CD4-positive, alpha-beta T cell (primary cell): ENCODE measurements at regions of chr14 and their contacts with region 1.

Region 1: DNA sequence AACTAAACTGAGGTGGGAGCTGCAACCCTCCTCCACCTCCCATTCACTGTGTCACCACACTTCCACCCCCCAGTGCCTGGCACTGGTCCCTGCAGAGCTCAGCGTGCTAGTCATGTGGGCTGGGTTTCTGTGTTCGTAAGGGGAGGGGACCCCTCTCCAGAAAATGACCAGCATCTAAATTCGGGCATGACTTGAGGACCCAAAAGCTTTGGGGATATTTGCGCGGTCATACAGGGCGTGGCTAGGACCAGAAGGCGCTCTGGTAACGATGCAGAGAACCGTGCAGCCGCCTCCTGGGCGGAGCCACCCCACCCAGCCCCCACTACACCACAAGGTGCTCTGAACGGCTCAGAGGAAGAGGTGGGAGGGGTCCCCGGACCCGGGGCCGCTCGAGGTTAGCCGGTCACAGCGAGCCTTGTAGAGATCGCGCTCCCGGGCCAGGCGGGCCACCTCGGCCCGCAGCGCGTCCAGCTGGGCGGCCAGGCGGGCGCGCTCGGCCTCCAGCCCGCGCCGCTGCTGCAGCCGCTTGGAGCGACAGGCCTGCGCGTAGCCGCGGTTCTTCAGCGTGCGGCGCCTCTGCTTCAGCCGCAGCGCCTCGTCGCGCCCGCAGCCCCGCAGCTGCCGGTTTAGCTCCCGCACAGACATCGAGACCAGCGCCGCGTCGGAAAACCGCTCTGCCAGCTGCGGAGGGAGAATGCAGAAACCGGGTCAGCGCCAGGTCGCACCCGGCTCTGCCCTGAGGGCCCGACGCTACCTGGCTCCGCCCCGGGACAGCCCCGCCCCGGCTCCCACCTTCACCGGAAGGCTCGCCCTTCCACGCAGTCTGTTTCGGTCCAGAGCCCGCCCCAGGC is 9.8 kb downstream of the CPNE6 start:
- DNase-seq: peak; percentile 47 to 82 (median 68)
- ATAC-seq: peak; percentile 90
- H3K4me3 ChIP-seq: peak overlapping the region; percentile 56
- H3K4me3 Mint-ChIP-seq: peak overlapping the region; percentile 93
- H3K27ac ChIP-seq: peak overlapping the region; percentile 2 to 52
- H3K27ac Mint-ChIP-seq: peak overlapping the region; percentile 90
- H3K4me1 ChIP-seq: peaks cover 21% of the 10 kb centered on the region
- H3K4me1 Mint-ChIP-seq: peaks cover 24% of the 10 kb centered on the region
- H3K27me3 ChIP-seq: no peaks in the 10 kb centered on the region
- H3K27me3 Mint-ChIP-seq: no peaks in the 10 kb centered on the region
- CTCF ChIP-seq: no peak

Region 2: DNA sequence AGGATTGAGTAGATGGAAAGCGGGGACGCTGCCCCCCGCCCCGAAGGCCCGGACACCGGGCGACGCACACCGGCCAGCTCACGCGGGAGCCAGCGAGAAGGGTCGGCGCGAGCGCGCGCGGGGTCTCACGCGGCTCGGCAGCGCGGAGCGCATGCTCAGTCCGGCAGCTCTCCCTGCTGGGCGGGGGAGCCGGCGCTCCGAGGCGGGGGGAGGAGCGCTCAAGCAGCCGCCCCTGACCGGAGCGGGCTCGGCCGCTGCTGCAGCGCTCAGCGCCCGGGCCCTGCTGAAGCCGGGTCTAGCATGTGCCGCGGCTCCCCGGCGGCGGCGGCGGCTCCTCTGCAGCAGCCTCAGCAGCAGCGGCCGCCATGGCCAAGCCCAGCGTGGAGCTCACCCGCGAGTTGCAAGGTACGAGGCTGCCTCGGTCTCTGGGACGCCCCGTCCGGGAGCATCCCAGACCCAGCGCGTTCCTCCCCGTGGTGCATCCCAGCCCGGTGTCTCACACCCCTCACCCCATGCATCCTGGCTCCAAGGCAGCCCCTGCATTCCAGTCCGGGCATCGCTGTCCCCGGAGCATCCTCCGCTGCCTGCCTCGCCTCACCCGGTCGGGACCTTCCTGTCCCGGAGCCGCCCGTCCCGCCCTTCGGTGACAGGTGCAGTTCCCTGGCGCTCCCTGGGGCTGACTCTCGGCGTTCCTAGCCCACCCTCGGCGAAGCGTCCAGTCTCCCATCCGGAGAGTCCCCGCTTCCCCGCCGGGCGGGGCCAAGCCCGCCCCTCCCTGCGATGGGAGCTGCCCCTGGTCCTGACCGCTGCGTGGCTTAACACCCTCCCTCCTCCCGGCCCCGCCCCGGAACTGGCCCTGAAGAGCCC is 29.1 kb before region 1 on chr14 and contains the start of gene CARMIL3:
- CTCF ChIA-PET with region 1: no interaction called
- POLR2A ChIA-PET with region 1: interaction called, 15 read pairs
- intact Hi-C with region 1: no loop called
- DNase-seq: peak in 13 of 14 experiments; percentile 29 to 82 (median 51)
- ATAC-seq: peak; percentile 76
- H3K4me3 ChIP-seq: peak within 1 kb of the TSS; percentile 71
- H3K4me3 Mint-ChIP-seq: peak within 1 kb of the TSS; percentile 90
- H3K27ac ChIP-seq: no peak within 1 kb of the TSS
- H3K27ac Mint-ChIP-seq: no peak within 1 kb of the TSS
- H3K4me1 ChIP-seq: peaks cover 21% of the 10 kb centered on the region
- H3K4me1 Mint-ChIP-seq: peaks cover 14% of the 10 kb centered on the region
- H3K27me3 ChIP-seq: peaks cover 0 to 16% of the 10 kb centered on the region in 2 experiments
- H3K27me3 Mint-ChIP-seq: peaks cover 25% of the 10 kb centered on the region
- CTCF ChIP-seq: no peak
- total RNA-seq, gene CARMIL3: 0.05 to 0.11 TPM

Region 3: GRCh38 chr14:24058260-24058950 is 22.7 kb before region 1 on chr14:
- CTCF ChIA-PET with region 1: no interaction called
- POLR2A ChIA-PET with region 1: interaction called, 11 read pairs
- intact Hi-C with region 1: no loop called
- DNase-seq: peak in 6 of 14 experiments; percentile 30 to 82 (median 48)
- ATAC-seq: peak; percentile 83
- H3K4me3 ChIP-seq: no peak overlapping the region
- H3K4me3 Mint-ChIP-seq: no peak overlapping the region
- H3K27ac ChIP-seq: no peak overlapping the region
- H3K27ac Mint-ChIP-seq: no peak overlapping the region
- H3K4me1 ChIP-seq: peaks cover 2% of the 10 kb centered on the region
- H3K4me1 Mint-ChIP-seq: no peaks in the 10 kb centered on the region
- H3K27me3 ChIP-seq: peaks cover 0 to 10% of the 10 kb centered on the region in 2 experiments
- H3K27me3 Mint-ChIP-seq: peaks cover 10% of the 10 kb centered on the region
- CTCF ChIP-seq: peak; percentile 70

Region 4: GRCh38 chr14:24135834-24136542 is 54.9 kb after region 1 on chr14 and contains the start of gene PSME1:
- CTCF ChIA-PET with region 1: interaction called, 3 read pairs
- POLR2A ChIA-PET with region 1: interaction called, 10 read pairs
- intact Hi-C with region 1: no loop called
- DNase-seq: peak; percentile 89 to 97 (median 95)
- ATAC-seq: peak; percentile 97
- H3K4me3 ChIP-seq: peak within 1 kb of the TSS; percentile 74
- H3K4me3 Mint-ChIP-seq: peak within 1 kb of the TSS; percentile 94
- H3K27ac ChIP-seq: peak within 1 kb of the TSS; percentile 72 to 88
- H3K27ac Mint-ChIP-seq: peak within 1 kb of the TSS; percentile 85
- H3K4me1 ChIP-seq: peaks cover 68% of the 10 kb centered on the region
- H3K4me1 Mint-ChIP-seq: peaks cover 70% of the 10 kb centered on the region
- H3K27me3 ChIP-seq: no peaks in the 10 kb centered on the region
- H3K27me3 Mint-ChIP-seq: no peaks in the 10 kb centered on the region
- CTCF ChIP-seq: no peak
- total RNA-seq, gene PSME1: 166 to 171 TPM

Region 5: DNA sequence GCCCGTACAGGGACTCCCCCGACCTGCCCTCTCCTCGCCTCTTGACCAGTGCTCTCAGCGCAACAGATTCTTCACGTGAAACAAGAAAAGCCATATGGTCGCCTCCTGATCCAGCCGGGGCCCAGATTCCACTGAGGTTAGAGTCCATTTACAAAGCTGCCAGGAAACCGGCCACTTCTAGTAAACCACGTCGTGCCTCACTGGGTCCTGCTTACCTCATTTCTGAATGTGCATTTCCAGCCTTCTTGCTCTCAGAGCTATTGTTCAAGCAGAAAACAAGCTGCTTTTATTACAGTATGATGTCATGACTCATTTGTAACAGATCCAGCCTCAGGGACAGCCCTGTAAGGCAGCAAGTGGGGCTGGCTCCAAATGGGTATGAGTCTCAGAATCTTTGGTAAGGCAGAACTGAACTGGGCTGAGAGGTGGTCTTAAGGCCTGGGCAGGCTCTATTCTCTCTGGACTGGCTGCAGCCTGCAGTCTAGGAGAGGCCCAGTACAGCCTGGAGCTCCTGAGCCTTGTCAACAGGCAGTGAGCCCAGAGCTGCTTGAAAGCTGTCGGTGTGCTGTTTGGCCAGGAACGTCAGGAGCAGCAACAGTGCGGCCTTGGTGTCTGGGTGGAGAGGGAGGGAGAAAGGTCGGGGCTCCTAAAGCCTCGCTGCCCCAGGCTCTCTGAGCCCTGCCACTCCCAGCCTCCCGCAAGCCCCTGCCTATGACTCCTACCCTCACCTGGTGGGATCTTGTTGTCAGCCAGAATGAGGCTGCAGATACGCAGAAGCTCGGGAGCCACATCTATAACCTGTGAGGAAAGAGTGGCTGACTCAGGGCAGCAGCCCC is 99.1 kb after region 1 on chr14:
- CTCF ChIA-PET with region 1: no interaction called
- POLR2A ChIA-PET with region 1: no interaction called
- intact Hi-C with region 1: no loop called
- DNase-seq: no peak
- ATAC-seq: no peak
- H3K4me3 ChIP-seq: no peak overlapping the region
- H3K4me3 Mint-ChIP-seq: no peak overlapping the region
- H3K27ac ChIP-seq: no peak overlapping the region
- H3K27ac Mint-ChIP-seq: no peak overlapping the region
- H3K4me1 ChIP-seq: peaks cover 3% of the 10 kb centered on the region
- H3K4me1 Mint-ChIP-seq: no peaks in the 10 kb centered on the region
- H3K27me3 ChIP-seq: no peaks in the 10 kb centered on the region
- H3K27me3 Mint-ChIP-seq: no peaks in the 10 kb centered on the region
- CTCF ChIP-seq: no peak